Naive thymus-derived CD8-positive, alpha-beta T cell (primary cell): ENCODE measurements at regions of chr10 and their contacts with region 1.

Region 1: DNA sequence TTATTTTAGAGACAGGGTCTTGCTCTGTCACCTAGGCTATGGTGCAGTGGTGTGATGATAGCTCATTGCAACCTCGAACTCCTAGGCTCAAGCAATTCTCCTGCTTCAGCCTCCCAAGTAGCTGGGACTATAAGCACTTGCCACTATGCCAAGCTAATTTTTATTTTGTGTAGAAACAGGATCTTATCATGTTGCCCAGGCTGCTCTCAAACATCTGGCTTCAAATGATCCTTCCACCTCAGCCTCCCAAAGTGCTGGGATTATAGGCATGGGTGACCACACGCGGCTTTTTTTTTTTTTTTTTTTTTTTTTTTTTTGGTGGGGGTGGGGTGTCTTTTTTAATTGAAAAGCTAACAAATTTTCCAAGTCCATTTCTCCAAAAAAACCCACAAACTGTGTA is 18.4 kb downstream of the HPS6 start:
- DNase-seq: no peak
- ATAC-seq: no peak
- H3K4me3 Mint-ChIP-seq: no peak overlapping the region
- H3K27ac Mint-ChIP-seq: no peak overlapping the region
- H3K4me1 Mint-ChIP-seq: peaks cover 0 to 3% (median 0%) of the 10 kb centered on the region in 4 donors
- H3K27me3 Mint-ChIP-seq: no peaks in the 10 kb centered on the region

Region 2: DNA sequence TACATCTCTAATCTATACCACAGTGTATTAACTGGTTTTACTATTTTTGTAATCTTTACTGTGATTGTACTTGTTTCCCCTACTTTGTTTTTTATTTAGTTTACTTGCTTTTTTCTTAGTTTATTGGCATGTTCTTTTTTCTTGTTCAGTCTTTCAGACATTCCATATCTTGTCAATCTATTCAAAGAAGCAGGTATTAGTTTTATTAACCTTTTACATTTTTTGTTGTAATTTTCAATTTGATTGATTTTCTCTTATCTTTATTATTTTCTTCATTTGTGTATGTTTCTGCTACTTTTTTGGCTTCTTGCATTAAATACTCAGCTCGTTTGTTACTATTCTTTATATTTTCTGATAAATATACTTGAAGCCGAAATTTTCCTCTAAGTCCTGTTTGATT is 910.8 kb before region 1 on chr10:
- POLR2A ChIA-PET with region 1: interaction called, 10 read pairs
- DNase-seq: no peak
- ATAC-seq: no peak
- H3K4me3 Mint-ChIP-seq: no peak overlapping the region
- H3K27ac Mint-ChIP-seq: no peak overlapping the region
- H3K4me1 Mint-ChIP-seq: no peaks in the 10 kb centered on the region
- H3K27me3 Mint-ChIP-seq: peaks cover 34 to 80% (median 57%) of the 10 kb centered on the region in 5 donors

Region 3: DNA sequence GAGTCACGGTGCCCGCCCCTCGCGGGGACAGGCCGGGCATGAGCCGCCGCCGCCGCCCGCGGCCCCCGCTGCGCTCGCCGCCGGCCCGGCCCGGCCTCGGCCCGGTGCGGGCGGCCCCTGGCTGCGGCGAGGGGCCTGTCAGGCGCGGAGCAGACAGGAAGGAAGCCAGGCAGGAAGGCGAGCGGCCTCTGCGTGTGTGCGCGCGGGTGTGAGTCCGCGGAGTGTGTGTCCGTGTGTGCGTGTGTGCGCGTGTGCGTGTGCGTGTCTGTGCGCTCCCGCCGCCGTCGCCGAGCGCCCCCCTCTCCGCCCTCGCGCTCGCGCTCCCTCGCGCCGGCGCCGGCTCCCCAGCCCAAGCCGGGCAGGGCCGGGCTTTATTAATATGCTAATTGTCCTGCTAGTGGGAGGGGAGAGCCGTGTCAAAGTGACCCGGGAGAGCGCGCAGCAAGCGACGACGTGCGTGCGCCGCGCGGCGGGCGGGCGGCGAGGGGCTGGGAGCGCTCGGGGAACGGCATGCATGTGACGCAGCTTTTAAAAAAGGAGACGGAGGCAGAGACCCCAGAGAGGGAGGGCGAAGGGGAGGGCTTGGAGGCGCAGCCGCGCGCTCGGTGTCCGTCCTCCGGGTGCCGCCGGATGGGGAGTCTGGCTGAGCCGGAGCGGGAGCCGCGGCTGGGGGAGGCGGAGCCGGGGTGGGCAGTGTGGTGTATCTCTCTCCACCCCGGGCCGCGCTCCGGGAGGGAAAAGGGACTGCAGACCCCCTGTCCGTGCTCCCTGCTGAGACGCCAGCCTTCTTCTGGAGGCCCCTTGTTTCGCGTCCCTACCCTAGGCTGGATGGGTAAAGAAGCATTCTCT is 36.8 kb after region 1 on chr10 and contains the start of gene LDB1:
- POLR2A ChIA-PET with region 1: no interaction called
- DNase-seq: peak; percentile 53 to 87 (median 73)
- ATAC-seq: peak; percentile 48 to 50
- H3K4me3 Mint-ChIP-seq: peak within 1 kb of the TSS; percentile 89 to 97 (median 94)
- H3K27ac Mint-ChIP-seq: peak within 1 kb of the TSS; percentile 97 to 99 (median 98)
- H3K4me1 Mint-ChIP-seq: peaks cover 36 to 65% (median 57%) of the 10 kb centered on the region in 4 donors
- H3K27me3 Mint-ChIP-seq: no peaks in the 10 kb centered on the region
- polyA plus RNA-seq, gene LDB1: 29.2 to 45.1 (median 40.7) TPM